ENCODE measurements at regions of chr7 and their contacts with region 1.

Region 1: DNA sequence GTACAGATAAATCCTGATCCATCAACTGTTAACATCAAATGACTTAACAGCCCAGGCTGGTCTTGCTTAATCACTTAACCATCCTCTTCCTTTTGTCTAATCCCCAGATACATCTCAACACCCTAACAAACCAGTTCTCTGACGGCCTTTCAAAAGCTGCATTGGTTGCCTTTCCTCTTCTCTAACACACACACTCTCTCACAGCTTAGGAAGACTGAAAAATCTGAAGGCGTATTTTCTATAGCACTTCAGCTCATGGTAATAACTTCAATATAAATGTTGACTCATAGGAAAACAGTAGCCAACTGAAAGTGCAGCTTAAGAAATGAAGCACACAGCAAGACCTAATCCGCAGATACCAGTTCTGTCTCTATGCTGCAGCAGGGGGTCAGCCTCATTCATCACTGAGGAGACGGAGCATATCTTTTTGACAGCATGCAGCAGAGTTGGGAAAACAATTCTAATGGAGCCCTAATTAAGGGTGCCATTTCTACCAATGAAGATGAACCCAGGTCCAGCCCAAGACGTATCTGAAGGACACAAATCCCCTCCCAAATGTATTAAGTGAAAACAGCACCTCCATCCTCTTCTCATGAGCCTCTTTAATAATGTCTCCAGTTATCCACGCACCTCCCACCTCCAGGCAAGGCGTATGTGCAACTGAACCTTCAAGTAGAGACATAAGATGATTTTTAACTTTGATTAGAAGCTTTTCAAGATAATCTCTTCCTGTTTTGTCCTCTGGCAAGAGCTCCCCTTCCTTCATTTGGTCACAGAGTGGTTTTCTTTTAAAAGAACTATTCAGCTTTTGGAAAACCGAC is 211.7 kb upstream of the NFE2L3 start:
- DNase-seq: no peak
- H3K4me3 Mint-ChIP-seq: peak overlapping the region; percentile 42
- H3K27ac Mint-ChIP-seq: peak overlapping the region; percentile 46
- H3K4me1 Mint-ChIP-seq: peaks cover 24% of the 10 kb centered on the region
- H3K27me3 Mint-ChIP-seq: no peaks in the 10 kb centered on the region
- CTCF ChIP-seq: no peak

Region 2: DNA sequence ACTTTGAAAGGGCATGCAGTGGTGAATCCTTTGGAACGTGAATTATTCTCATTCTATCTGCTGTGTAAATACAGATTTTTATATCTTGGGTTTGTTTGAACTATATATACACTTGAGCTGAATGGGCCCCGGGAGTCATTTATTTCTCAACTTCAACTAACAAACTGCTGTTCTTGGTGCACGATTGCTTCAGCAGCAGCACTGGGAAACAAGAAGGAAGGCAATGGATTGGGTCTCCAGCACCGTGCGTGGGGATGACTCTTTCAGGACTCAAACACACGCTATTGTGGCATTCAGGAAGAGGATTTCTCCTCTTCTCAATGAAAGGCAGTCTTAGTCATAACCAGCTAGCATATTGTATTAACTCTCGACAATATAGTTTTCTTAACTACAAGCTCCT is 14.3 kb before region 1 on chr7:
- CTCF ChIA-PET with region 1: interaction called, 4 read pairs
- POLR2A ChIA-PET with region 1: interaction called, 15 read pairs
- intact Hi-C with region 1: loop called (anchors 2 kb)
- DNase-seq: peak; percentile 95
- H3K4me3 Mint-ChIP-seq: no peak overlapping the region
- H3K27ac Mint-ChIP-seq: peak overlapping the region; percentile 42
- H3K4me1 Mint-ChIP-seq: peaks cover 13% of the 10 kb centered on the region
- H3K27me3 Mint-ChIP-seq: no peaks in the 10 kb centered on the region
- CTCF ChIP-seq: no peak

Region 3: GRCh38 chr7:25951031-25951948 is 11.0 kb after region 1 on chr7:
- CTCF ChIA-PET with region 1: interaction called, 5 read pairs
- POLR2A ChIA-PET with region 1: interaction called, 13 read pairs
- intact Hi-C with region 1: no loop called
- DNase-seq: peak; percentile 90
- H3K4me3 Mint-ChIP-seq: peak overlapping the region; percentile 85
- H3K27ac Mint-ChIP-seq: peak overlapping the region; percentile 86
- H3K4me1 Mint-ChIP-seq: peaks cover 10% of the 10 kb centered on the region
- H3K27me3 Mint-ChIP-seq: peaks cover 10% of the 10 kb centered on the region
- CTCF ChIP-seq: no peak

Measured in MCF 10A (cell line).